ENCODE measurements at regions of chr2 and their contacts with region 1.

Region 1: DNA sequence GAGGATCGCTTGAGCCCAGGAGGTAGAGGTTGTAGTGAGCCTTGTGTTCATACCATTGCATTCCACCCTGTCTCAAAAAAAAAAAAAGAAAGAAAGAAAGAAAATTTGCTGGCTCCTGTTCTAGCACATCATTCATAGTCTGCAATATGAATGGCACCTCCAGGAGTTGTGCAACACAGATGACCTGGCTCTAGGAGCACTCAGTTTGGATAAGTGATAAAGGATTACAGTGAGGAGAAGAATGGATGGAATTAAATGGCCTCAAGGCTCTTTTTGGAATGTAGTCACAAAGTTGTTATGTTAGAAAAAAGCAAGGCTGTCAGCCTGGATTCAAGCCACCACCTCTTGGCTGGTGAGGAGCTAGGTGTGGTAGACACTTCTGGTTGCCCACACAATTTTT is 21.5 kb upstream of the SPRED2 start:
- DNase-seq: no peak
- H3K4me3 ChIP-seq: no peak overlapping the region
- H3K27ac ChIP-seq: no peak overlapping the region
- H3K4me1 ChIP-seq: no peaks in the 10 kb centered on the region
- CTCF ChIP-seq: no peak

Region 2: DNA sequence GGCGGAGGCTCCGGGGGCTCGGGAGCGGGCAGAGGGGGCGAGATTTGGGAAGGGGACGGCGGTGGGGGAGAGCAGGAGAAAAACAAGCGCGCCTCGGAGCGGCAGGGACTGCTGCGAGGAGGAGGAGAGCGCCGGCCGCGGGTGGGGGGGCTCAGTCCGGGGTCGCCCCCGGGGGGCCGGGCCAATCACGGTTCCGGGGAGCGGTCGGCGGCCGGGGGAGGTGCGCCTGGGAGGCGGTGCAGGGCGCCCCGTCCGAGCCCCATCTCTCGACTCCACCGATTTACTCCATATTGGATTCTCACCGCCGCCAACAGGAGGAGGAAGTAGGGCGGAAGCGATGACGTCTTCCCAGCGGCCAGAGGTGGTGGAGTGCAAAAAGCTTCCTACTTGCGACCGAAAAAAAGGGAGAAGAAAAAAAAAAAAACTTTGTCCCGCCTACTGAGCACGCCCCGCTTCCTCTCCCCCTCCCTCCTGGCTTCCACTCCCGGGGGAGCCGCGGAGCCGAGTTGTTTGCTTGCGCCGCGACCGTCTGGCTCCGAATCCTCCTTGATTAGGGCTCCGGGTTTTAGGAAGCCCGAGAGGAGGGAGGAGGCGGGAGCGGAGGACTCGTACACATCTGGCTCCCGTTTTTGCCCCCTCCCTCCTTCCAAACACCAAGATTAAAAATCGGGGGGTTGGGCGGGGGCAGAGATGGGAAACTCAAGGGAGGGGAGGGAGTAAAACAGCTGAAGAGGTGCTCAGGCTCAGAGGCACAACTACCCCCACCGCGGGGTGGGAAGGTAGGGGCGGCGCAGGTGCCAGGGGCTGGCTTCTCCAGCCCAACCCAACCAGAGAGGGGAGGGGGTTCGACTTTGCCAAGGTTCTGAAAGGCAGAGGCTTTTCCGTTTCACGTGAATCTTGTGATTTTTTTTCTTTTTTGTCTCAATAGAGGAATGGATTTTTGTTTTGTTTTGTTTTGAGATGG is 21.4 kb before region 1 on chr2 and contains the start of gene SPRED2:
- CTCF ChIA-PET with region 1: no interaction called
- POLR2A ChIA-PET with region 1: no interaction called
- intact Hi-C with region 1: no loop called
- DNase-seq: peak; percentile 92
- H3K4me3 ChIP-seq: peak within 1 kb of the TSS; percentile 93
- H3K27ac ChIP-seq: peak within 1 kb of the TSS; percentile 77
- H3K4me1 ChIP-seq: peaks cover 44% of the 10 kb centered on the region
- CTCF ChIP-seq: no peak
- total RNA-seq, gene SPRED2: 4.9 and 8.0 TPM in 2 replicates

Region 3: GRCh38 chr2:65487404-65487803 is 33.5 kb after region 1 on chr2:
- CTCF ChIA-PET with region 1: no interaction called
- POLR2A ChIA-PET with region 1: no interaction called
- intact Hi-C with region 1: loop called (anchors 5 kb)
- DNase-seq: no peak
- H3K4me3 ChIP-seq: no peak overlapping the region
- H3K27ac ChIP-seq: no peak overlapping the region
- H3K4me1 ChIP-seq: no peaks in the 10 kb centered on the region
- CTCF ChIP-seq: no peak

Region 4: GRCh38 chr2:65638443-65638842 is 184.5 kb after region 1 on chr2:
- CTCF ChIA-PET with region 1: no interaction called
- POLR2A ChIA-PET with region 1: no interaction called
- intact Hi-C with region 1: no loop called
- DNase-seq: no peak
- H3K4me3 ChIP-seq: no peak overlapping the region
- H3K27ac ChIP-seq: no peak overlapping the region
- H3K4me1 ChIP-seq: no peaks in the 10 kb centered on the region
- CTCF ChIP-seq: peak; percentile 47

Region 5: DNA sequence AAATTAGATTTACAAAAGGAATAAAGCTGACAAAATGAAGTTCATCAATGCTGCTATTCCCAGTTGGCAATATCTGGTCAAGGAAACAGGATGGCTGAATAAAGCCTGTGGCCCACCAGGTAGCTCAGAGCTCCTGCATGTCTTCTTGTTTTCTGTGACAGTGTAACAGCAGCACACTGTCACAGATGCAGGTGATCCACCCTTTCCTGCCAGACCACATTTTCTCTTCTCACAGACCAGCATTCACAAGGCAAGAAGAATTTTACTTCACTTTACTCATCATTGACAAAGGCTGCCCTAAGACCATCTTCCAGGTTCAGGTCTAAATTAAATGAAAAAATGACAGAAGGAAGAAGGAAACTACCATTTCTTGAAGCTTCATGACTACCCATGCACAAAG is 814.8 kb after region 1 on chr2:
- CTCF ChIA-PET with region 1: no interaction called
- POLR2A ChIA-PET with region 1: no interaction called
- intact Hi-C with region 1: no loop called
- DNase-seq: no peak
- H3K4me3 ChIP-seq: no peak overlapping the region
- H3K27ac ChIP-seq: no peak overlapping the region
- H3K4me1 ChIP-seq: no peaks in the 10 kb centered on the region
- CTCF ChIP-seq: no peak